ENCODE measurements at regions of chr2 and their contacts with region 1.

Region 1: DNA sequence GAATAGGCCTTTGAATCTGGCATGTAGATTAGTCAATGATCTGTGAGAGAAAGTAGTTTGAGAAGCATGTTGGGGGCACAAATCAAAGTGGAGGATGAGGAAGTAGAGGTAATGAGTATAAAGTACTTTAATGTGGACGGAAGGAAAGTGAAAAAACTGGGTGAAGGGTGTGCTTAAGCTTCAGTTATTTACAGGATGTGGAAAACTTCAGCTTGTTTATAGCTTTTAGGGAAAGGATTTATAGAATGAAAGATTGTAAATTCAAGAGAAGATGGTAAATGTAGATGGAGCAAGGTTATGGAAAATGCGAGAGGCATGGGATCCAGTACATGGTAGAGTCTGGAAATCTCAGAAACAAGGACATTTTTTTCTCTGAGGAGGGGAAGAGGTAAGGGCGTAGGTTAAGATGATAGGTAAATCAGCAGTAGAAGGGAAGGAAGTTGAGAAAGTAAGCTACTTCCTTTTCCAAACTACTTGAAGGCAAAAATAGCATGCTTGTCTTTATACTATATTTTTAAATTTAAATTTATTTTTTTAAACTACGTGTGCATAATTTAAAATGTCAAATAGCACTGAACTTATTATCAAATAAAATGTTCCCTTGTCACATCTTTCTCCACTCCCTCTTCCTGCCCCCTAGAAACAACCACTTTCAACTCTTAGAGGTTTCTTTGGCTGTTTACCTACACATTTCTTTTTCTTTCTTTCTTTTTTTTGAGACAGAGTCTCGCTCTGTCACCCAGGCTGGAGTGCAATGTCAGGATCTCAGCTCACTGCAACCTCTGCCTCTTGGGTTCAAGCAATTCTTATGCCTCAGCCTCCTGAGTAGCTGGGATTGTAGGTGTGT is 8.5 kb downstream of the FAM117B start:
- DNase-seq: peak in 4 of 14 experiments; percentile 31 to 83 (median 62)
- ATAC-seq: peak; percentile 65
- H3K4me3 ChIP-seq: peak overlapping the region; percentile 43
- H3K4me3 Mint-ChIP-seq: peak overlapping the region; percentile 86
- H3K27ac ChIP-seq: peak overlapping the region; percentile 58 to 65
- H3K27ac Mint-ChIP-seq: no peak overlapping the region
- H3K4me1 ChIP-seq: peaks cover 57% of the 10 kb centered on the region
- H3K4me1 Mint-ChIP-seq: peaks cover 62% of the 10 kb centered on the region
- H3K27me3 ChIP-seq: no peaks in the 10 kb centered on the region
- H3K27me3 Mint-ChIP-seq: no peaks in the 10 kb centered on the region
- CTCF ChIP-seq: no peak

Region 2: DNA sequence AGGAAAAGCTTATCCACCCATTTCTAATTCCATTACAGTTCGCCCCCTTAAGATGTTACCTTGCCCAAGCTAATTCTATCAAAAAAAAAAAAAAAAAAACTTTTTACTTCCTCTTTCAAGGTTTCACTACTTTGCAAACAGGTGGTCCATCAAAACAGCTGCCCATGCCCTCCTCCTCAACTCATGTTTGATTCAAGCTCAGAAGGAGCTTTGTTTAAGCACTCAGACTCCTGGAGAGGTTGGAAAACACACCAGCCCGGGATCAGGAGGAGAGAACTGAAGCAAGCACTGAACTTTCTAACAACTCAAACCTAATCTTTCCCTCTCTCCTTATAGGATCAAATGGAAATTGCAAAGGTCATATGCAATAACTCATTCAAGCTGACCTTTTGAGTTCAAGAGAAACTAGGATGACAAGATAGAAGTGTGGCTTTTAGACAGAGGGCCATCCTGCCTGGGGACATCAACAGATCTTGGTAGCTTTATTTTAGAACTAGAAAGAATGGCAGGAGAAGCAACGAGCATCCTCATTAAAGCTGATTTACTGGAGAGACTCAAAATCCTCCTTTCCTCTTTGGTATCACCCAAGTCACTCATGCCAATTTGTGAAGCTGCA is 637.9 kb before region 1 on chr2:
- CTCF ChIA-PET with region 1: no interaction called
- POLR2A ChIA-PET with region 1: no interaction called
- intact Hi-C with region 1: no loop called
- DNase-seq: no peak
- ATAC-seq: no peak
- H3K4me3 ChIP-seq: no peak overlapping the region
- H3K4me3 Mint-ChIP-seq: no peak overlapping the region
- H3K27ac ChIP-seq: no peak overlapping the region
- H3K27ac Mint-ChIP-seq: no peak overlapping the region
- H3K4me1 ChIP-seq: no peaks in the 10 kb centered on the region
- H3K4me1 Mint-ChIP-seq: no peaks in the 10 kb centered on the region
- H3K27me3 ChIP-seq: no peaks in the 10 kb centered on the region
- H3K27me3 Mint-ChIP-seq: peaks cover 9% of the 10 kb centered on the region
- CTCF ChIP-seq: no peak

Region 3: DNA sequence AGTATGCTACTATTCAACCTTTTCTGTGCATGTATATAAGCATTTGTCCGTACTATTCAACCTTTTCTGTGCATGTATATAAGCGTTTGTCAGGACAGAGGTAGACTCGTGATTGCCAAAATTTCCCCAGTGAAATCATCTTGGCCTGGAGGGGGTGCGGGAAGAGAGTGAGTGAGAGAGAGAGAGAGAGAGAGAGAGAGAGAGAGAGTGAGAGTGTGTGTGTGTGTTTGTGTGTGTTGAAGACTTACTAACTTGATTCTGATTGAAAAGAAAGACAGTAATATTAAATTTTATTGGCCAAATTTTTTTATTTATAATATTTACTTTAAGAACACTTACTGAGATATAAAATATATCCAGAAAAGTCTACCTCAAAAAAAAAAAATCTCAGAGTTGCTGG is 10.7 kb after region 1 on chr2:
- CTCF ChIA-PET with region 1: interaction called, 5 read pairs
- POLR2A ChIA-PET with region 1: interaction called, 50 read pairs
- intact Hi-C with region 1: no loop called
- DNase-seq: no peak
- ATAC-seq: no peak
- H3K4me3 ChIP-seq: no peak overlapping the region
- H3K4me3 Mint-ChIP-seq: peak overlapping the region; percentile 30
- H3K27ac ChIP-seq: no peak overlapping the region
- H3K27ac Mint-ChIP-seq: peak overlapping the region; percentile 78
- H3K4me1 ChIP-seq: peaks cover 33% of the 10 kb centered on the region
- H3K4me1 Mint-ChIP-seq: peaks cover 85% of the 10 kb centered on the region
- H3K27me3 ChIP-seq: no peaks in the 10 kb centered on the region
- H3K27me3 Mint-ChIP-seq: no peaks in the 10 kb centered on the region
- CTCF ChIP-seq: no peak

Region 4: DNA sequence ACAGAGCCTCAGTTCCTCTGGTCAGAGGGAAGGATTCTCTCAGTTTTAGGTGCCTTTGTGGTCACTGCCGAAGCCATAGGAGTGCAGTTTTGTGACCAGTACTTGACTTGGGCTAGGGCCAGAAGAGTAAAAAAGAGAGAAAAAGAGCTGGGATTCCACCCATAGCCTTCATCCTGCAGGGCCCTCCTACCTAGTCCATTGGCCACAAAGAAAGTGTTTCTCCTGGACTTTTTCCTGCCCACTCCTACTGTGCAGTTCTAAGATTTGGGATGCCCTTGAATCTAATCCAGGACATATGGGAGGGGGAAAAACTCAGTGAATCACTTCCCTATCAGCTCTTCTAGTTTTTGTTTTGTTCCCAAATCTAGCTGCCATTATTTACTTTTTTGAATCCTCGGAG is 17.6 kb after region 1 on chr2:
- CTCF ChIA-PET with region 1: interaction called, 5 read pairs
- POLR2A ChIA-PET with region 1: interaction called, 33 read pairs
- intact Hi-C with region 1: loop called in 1 of 2 experiments (anchors 2 kb)
- DNase-seq: no peak
- ATAC-seq: no peak
- H3K4me3 ChIP-seq: no peak overlapping the region
- H3K4me3 Mint-ChIP-seq: no peak overlapping the region
- H3K27ac ChIP-seq: no peak overlapping the region
- H3K27ac Mint-ChIP-seq: peak overlapping the region; percentile 37
- H3K4me1 ChIP-seq: peaks cover 28% of the 10 kb centered on the region
- H3K4me1 Mint-ChIP-seq: peaks cover 89% of the 10 kb centered on the region
- H3K27me3 ChIP-seq: no peaks in the 10 kb centered on the region
- H3K27me3 Mint-ChIP-seq: no peaks in the 10 kb centered on the region
- CTCF ChIP-seq: no peak

Region 5: DNA sequence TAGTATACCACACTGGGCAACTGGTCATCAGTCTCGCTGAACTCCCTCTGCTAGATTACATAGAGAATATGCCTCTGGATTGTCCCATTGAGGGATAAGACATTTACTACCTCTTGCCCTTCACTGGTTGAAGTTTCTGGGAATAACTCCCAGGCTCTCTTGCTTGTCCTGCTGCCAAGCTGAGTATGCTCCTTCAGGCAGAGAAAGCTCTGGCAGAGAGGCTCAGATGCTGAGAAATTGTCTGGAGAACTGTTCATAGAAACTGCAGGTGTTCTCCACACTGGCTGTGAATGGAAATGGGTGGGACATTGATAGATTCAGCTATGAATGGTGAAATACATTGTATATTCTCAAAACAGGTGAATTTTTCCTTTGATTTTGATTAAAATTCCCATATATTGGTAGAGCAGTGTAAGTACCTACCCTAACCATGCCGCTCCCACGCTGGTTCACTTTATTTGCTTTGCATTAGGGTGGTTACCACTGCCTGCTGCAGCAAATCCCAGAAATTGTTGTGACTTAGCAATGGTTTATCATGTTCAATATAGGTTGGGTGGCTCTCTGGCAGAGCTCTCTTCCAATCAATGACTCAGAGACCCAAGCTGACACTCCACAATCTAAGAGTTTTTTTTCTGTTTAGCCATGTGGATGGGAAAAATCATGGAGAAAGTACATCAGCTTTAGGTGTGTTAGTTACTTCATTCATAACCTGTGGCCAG is 28.2 kb after region 1 on chr2:
- CTCF ChIA-PET with region 1: no interaction called
- POLR2A ChIA-PET with region 1: interaction called, 38 read pairs
- intact Hi-C with region 1: loop called in 1 of 2 experiments (anchors 5 kb)
- DNase-seq: no peak
- ATAC-seq: no peak
- H3K4me3 ChIP-seq: no peak overlapping the region
- H3K4me3 Mint-ChIP-seq: peak overlapping the region; percentile 34
- H3K27ac ChIP-seq: no peak overlapping the region
- H3K27ac Mint-ChIP-seq: peak overlapping the region; percentile 39
- H3K4me1 ChIP-seq: peaks cover 39% of the 10 kb centered on the region
- H3K4me1 Mint-ChIP-seq: peaks cover 81% of the 10 kb centered on the region
- H3K27me3 ChIP-seq: no peaks in the 10 kb centered on the region
- H3K27me3 Mint-ChIP-seq: no peaks in the 10 kb centered on the region
- CTCF ChIP-seq: no peak

Region 6: DNA sequence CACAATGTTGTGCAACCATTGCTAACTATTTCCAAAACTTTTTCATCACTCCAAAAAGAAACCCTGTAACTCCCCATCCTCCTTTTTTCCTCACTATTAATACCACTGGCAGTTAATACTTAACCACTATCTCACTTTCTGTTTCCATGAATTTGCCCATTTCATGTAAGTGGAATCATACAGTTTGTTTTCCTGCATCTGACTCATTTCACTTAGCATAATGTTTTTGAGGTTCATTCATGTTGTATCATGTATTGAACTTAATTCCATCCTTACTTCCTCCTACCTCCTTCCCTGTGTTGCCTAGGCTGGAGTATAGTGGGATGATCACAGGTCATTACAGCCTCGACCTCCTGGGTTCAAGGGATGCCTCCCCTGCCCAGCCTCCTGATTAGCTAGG is 59.9 kb after region 1 on chr2:
- CTCF ChIA-PET with region 1: no interaction called
- POLR2A ChIA-PET with region 1: interaction called, 10 read pairs
- intact Hi-C with region 1: loop called in 1 of 2 experiments (anchors 10 kb)
- DNase-seq: no peak
- ATAC-seq: no peak
- H3K4me3 ChIP-seq: no peak overlapping the region
- H3K4me3 Mint-ChIP-seq: no peak overlapping the region
- H3K27ac ChIP-seq: no peak overlapping the region
- H3K27ac Mint-ChIP-seq: peak overlapping the region; percentile 1
- H3K4me1 ChIP-seq: peaks cover 7% of the 10 kb centered on the region
- H3K4me1 Mint-ChIP-seq: peaks cover 66% of the 10 kb centered on the region
- H3K27me3 ChIP-seq: no peaks in the 10 kb centered on the region
- H3K27me3 Mint-ChIP-seq: no peaks in the 10 kb centered on the region
- CTCF ChIP-seq: no peak

Region 7: GRCh38 chr2:202932425-202933138 is 289.3 kb after region 1 on chr2:
- CTCF ChIA-PET with region 1: no interaction called
- POLR2A ChIA-PET with region 1: no interaction called
- intact Hi-C with region 1: no loop called
- DNase-seq: no peak
- ATAC-seq: no peak
- H3K4me3 ChIP-seq: no peak overlapping the region
- H3K4me3 Mint-ChIP-seq: no peak overlapping the region
- H3K27ac ChIP-seq: no peak overlapping the region
- H3K27ac Mint-ChIP-seq: no peak overlapping the region
- H3K4me1 ChIP-seq: no peaks in the 10 kb centered on the region
- H3K4me1 Mint-ChIP-seq: peaks cover 4% of the 10 kb centered on the region
- H3K27me3 ChIP-seq: no peaks in the 10 kb centered on the region
- H3K27me3 Mint-ChIP-seq: no peaks in the 10 kb centered on the region
- CTCF ChIP-seq: no peak